ENCODE measurements at regions of chr5 and their contacts with region 1.

Region 1: GRCh38 chr5:87121304-87122150 is 146.2 kb upstream of the RASA1 start:
- DNase-seq: peak; percentile 38 to 83
- H3K4me3 ChIP-seq: peak overlapping the region; percentile 13; the same call in 1 of the 2 replicates
- H3K27ac ChIP-seq: peak overlapping the region; percentile 92
- H3K4me1 ChIP-seq: peaks cover 52% of the 10 kb centered on the region
- H3K27me3 ChIP-seq: no peaks in the 10 kb centered on the region
- CTCF ChIP-seq: no peak

Region 2: DNA sequence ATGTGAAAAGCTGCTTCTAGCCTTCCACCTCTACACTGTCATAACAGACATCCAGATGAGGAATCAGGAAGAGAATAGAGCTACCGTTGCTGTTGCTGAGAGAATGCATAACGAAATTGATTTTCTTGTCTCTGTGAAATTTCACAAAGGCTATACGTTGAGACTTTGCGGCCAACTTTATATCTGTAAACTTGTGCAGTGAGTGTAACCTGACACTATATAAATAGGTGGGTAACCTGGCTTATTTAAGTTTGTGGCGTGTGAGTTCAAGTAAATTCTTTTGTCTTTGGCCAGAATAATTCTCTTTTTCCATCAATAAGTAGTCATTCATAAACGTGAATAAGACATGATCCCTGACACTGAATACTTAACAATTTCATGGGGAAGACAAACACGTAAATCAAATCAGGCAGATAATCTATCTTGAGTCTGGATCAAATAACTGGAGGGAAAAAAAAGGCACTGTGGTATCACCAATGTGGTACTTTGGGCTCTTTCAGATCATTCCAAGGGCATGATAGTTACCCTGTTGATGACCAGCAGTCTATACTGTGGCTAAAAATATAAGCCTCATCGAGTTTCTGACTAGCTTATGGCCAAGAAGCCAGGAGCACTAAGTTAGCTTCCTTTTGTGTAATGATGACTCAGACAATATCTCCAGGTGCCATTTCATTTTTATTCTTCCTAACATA is 47.9 kb after region 1 on chr5:
- CTCF ChIA-PET with region 1: no interaction called
- POLR2A ChIA-PET with region 1: no interaction called
- intact Hi-C with region 1: loop called (anchors 1 kb)
- DNase-seq: no peak
- H3K4me3 ChIP-seq: no peak overlapping the region
- H3K27ac ChIP-seq: no peak overlapping the region
- H3K4me1 ChIP-seq: no peaks in the 10 kb centered on the region
- H3K27me3 ChIP-seq: no peaks in the 10 kb centered on the region
- CTCF ChIP-seq: no peak

Region 3: DNA sequence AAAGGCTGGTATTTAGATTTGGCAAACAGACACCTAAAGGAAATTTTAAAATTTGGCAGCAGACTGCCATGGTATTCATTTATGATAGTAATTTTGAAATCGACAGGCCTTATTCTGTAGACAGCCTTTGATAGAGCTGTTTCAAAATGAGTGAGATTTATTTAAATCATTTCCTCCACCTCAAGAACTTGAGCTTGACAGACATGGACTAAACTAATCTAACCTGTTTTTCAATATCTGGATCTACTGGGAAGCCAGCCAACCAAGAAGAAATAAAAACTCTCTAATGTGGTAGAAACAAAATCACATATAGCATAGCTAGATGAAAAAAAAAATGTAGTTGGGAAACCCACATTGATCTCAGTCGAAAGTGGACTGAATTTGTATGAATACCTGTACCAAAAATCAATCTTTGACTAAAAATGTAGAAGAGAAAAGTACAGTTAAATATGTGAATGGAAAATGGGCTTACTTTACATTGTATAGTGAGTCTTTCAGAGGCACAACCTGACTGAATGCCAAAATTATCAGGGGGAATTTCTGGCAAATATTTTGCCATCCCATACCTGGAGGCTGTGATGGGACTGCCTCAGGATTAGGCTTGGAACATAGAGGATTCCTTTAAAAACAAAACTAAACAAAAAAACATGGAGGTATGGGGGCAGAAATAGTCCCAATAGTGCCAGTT is 89.4 kb after region 1 on chr5:
- CTCF ChIA-PET with region 1: no interaction called
- POLR2A ChIA-PET with region 1: no interaction called
- intact Hi-C with region 1: loop called (anchors 5 kb)
- DNase-seq: peak in 1 of 2 experiments; percentile 88
- H3K4me3 ChIP-seq: no peak overlapping the region
- H3K27ac ChIP-seq: peak overlapping the region; percentile 48
- H3K4me1 ChIP-seq: peaks cover 20% of the 10 kb centered on the region
- H3K27me3 ChIP-seq: no peaks in the 10 kb centered on the region
- CTCF ChIP-seq: no peak

Region 4: DNA sequence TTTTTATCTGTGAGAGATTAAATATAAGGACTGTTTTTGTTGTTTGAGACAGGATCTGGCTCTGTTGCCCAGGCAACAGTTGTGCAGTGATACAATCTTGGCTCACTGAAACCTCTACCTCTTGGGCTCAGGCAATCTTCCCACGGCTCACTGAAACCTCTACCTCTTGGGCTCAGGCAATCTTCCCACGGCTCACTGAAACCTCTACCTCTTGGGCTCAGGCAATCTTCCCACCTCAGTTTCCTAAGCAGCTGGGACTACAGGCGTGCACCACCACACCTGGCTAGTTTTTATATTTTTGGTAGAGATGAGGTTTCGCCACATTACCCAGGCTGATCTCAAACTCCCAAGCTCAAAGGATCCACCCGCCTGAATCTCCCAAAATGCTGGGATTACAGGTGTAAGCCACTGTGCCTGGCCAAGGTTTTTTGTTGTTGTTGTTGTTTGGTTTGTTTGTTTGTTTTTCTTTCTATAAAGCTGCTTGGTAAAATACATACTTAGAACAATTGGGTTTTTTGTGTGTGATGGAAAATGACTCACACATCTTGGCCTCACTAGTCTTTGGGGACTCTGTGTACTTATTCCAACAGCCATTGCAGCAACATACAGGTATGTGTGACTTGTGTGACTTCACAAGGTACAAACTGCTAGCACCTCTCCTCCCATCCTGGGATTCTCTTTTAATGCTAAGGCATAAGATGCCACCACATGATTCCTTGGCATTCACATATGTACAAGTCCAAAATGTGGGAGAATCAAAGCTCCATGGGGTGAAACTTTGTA is 109.7 kb after region 1 on chr5:
- CTCF ChIA-PET with region 1: interaction called, 3 read pairs
- POLR2A ChIA-PET with region 1: no interaction called
- intact Hi-C with region 1: loop called (anchors 2 kb)
- DNase-seq: peak in 1 of 2 experiments; percentile 27
- H3K4me3 ChIP-seq: no peak overlapping the region
- H3K27ac ChIP-seq: no peak overlapping the region
- H3K4me1 ChIP-seq: no peaks in the 10 kb centered on the region
- H3K27me3 ChIP-seq: no peaks in the 10 kb centered on the region
- CTCF ChIP-seq: no peak

Region 5: GRCh38 chr5:87368601-87369000 is 247.1 kb after region 1 on chr5:
- CTCF ChIA-PET with region 1: no interaction called
- POLR2A ChIA-PET with region 1: no interaction called
- intact Hi-C with region 1: no loop called
- DNase-seq: no peak
- H3K4me3 ChIP-seq: no peak overlapping the region
- H3K27ac ChIP-seq: no peak overlapping the region
- H3K4me1 ChIP-seq: no peaks in the 10 kb centered on the region
- H3K27me3 ChIP-seq: no peaks in the 10 kb centered on the region
- CTCF ChIP-seq: no peak

Measured in PC-9 (cell line).